ENCODE measurements at regions of chr17 and their contacts with region 1.

Region 1: GRCh38 chr17:76000016-76000754 is 470 bp upstream of the CDK3 start:
- DNase-seq: peak; percentile 66
- ATAC-seq: peak; percentile 24
- H3K4me3 ChIP-seq: peak overlapping the region in 1 of 3 experiments; percentile 18; a peak in 1 of 6 replicates
- H3K27ac ChIP-seq: peak overlapping the region; percentile 50
- H3K4me1 ChIP-seq: peaks cover 100% of the 10 kb centered on the region
- H3K27me3 ChIP-seq: no peaks in the 10 kb centered on the region
- CTCF ChIP-seq: peak; percentile 92
- EP300 ChIP-seq: peak in 1 of 2 experiments; percentile 16; a peak in 1 of 4 replicates
- POLR2A ChIP-seq: no peak
- RAD21 ChIP-seq: peak; percentile 89

Region 2: GRCh38 chr17:75904749-75905521 is 95.2 kb before region 1 on chr17 and contains the start of gene MRPL38:
- CTCF ChIA-PET with region 1: interaction called, 55 read pairs
- POLR2A ChIA-PET with region 1: interaction called, 95 read pairs
- in situ Hi-C with region 1: loop called (anchors 5 kb)
- intact Hi-C with region 1: no loop called
- DNase-seq: peak; percentile 95
- ATAC-seq: peak; percentile 97
- H3K4me3 ChIP-seq: peak within 1 kb of the TSS; percentile 95 to 100 (median 97)
- H3K27ac ChIP-seq: peak within 1 kb of the TSS; percentile 76
- H3K4me1 ChIP-seq: peaks cover 38% of the 10 kb centered on the region
- H3K27me3 ChIP-seq: no peaks in the 10 kb centered on the region; a peak in 1 of 5 replicates
- CTCF ChIP-seq: peak; percentile 100
- EP300 ChIP-seq: peak in 1 of 2 experiments; percentile 58; a peak in 2 of 4 replicates
- POLR2A ChIP-seq: peak; percentile 75 to 86
- RAD21 ChIP-seq: peak; percentile 100
- total RNA-seq, gene MRPL38: 88.8 and 125 TPM in 2 replicates

Region 3: GRCh38 chr17:75940724-75941441 is 59.3 kb before region 1 on chr17 and contains the start of gene FBF1:
- CTCF ChIA-PET with region 1: no interaction called
- POLR2A ChIA-PET with region 1: interaction called, 15 read pairs
- in situ Hi-C with region 1: no loop called
- intact Hi-C with region 1: loop called (anchors 5 kb)
- DNase-seq: peak; percentile 93
- ATAC-seq: peak; percentile 96
- H3K4me3 ChIP-seq: peak within 1 kb of the TSS; percentile 73 to 83 (median 79)
- H3K27ac ChIP-seq: peak within 1 kb of the TSS; percentile 49
- H3K4me1 ChIP-seq: peaks cover 27% of the 10 kb centered on the region
- H3K27me3 ChIP-seq: no peaks in the 10 kb centered on the region; a peak in 1 of 5 replicates
- CTCF ChIP-seq: peak; percentile 58
- EP300 ChIP-seq: peak in 1 of 2 experiments; percentile 31; a peak in 1 of 4 replicates
- POLR2A ChIP-seq: peak; percentile 89 to 94
- RAD21 ChIP-seq: peak; percentile 70
- total RNA-seq, gene FBF1: 3.5 and 8.1 TPM in 2 replicates

Region 4: GRCh38 chr17:75959051-75959838 is 40.9 kb before region 1 on chr17:
- CTCF ChIA-PET with region 1: no interaction called
- POLR2A ChIA-PET with region 1: interaction called, 16 read pairs
- in situ Hi-C with region 1: loop called (anchors 5 kb)
- intact Hi-C with region 1: no loop called
- DNase-seq: peak; percentile 58
- ATAC-seq: peak; percentile 69
- H3K4me3 ChIP-seq: no peak overlapping the region; a peak in 1 of 6 replicates
- H3K27ac ChIP-seq: peak overlapping the region; percentile 52
- H3K4me1 ChIP-seq: peaks cover 37% of the 10 kb centered on the region
- H3K27me3 ChIP-seq: no peaks in the 10 kb centered on the region
- CTCF ChIP-seq: no peak
- EP300 ChIP-seq: peak in 1 of 2 experiments; percentile 58; a peak in 1 of 4 replicates
- POLR2A ChIP-seq: no peak
- RAD21 ChIP-seq: no peak

Region 5: DNA sequence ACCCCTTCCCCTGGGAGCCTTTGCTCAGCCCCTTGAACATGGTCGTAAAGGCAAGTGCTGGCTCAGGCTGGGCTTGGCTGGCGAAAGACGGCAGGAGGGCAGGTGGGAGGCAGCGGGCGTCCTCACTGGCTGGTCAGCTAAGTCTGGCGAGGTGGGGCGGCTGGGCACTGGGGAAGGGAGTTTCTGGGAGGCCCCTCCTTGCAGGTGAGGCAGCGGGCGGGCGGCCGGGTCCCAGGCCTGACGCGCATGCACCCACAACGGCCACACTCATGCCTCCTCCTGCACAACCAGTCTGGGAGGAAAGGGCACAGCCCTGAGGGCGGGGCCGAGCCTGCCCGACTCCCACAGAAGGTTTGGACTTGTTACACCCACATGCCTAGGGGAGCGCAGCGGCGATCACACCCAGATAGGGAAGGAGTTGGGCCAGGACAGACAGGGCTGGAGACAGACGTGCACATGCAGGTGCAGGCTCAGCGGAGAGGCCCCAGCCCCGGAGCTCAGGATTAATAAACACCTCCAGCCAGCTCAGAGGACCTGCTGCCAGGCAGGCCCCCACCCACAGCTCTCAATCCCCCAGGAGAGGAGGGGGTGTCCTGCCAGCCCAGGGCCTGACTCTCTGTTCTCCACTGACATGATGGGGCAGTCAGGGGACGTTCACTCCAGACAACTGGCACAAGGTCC is 27.1 kb after region 1 on chr17 and contains the start of gene EVPL:
- CTCF ChIA-PET with region 1: no interaction called
- POLR2A ChIA-PET with region 1: interaction called, 21 read pairs
- in situ Hi-C with region 1: no loop called
- intact Hi-C with region 1: loop called (anchors 1 kb)
- DNase-seq: peak; percentile 79
- ATAC-seq: peak; percentile 80
- H3K4me3 ChIP-seq: peak within 1 kb of the TSS; percentile 65 to 83 (median 69)
- H3K27ac ChIP-seq: peak within 1 kb of the TSS; percentile 69
- H3K4me1 ChIP-seq: peaks cover 58% of the 10 kb centered on the region
- H3K27me3 ChIP-seq: no peaks in the 10 kb centered on the region; a peak in 1 of 5 replicates
- CTCF ChIP-seq: no peak
- EP300 ChIP-seq: no peak
- POLR2A ChIP-seq: peak; percentile 63 to 76
- RAD21 ChIP-seq: no peak
- total RNA-seq, gene EVPL: 3.6 and 8.2 TPM in 2 replicates

Region 6: DNA sequence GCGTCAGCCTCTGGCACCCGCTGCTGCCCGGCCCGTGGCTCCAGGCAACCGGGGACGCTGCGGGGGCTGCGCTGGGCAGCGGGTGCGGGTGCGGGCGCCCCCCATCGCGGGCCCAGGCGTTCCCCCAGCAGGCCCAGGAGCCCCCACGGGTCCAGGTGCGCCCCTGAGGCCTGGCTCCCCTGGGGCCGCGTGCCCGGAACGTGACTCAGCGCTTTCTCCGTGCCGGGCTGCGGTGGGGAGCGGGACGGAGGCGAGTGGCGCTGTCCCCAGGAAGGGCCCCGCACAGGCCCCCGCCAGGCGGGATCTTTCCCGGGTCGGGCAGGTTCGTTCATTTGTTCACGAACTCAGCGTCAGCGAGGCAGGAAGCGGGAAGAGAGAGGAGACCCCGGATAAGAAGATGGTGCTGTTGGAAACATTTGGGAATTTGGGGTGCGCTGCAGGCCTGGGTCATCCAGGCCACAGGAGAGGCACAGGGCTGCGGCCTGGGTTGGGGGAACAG is 121.8 kb after region 1 on chr17:
- CTCF ChIA-PET with region 1: no interaction called
- POLR2A ChIA-PET with region 1: no interaction called
- in situ Hi-C with region 1: no loop called
- intact Hi-C with region 1: no loop called
- DNase-seq: no peak
- ATAC-seq: no peak
- H3K4me3 ChIP-seq: no peak overlapping the region
- H3K27ac ChIP-seq: no peak overlapping the region
- H3K4me1 ChIP-seq: peaks cover 28% of the 10 kb centered on the region
- H3K27me3 ChIP-seq: peaks cover 0 to 13% of the 10 kb centered on the region in 2 experiments; a peak in 3 of 5 replicates
- CTCF ChIP-seq: no peak
- EP300 ChIP-seq: no peak
- POLR2A ChIP-seq: no peak
- RAD21 ChIP-seq: no peak